Posterior cingulate gyrus (tissue), 11 donors: ENCODE measurements at regions of chr1 and their contacts with region 1.

Region 1: DNA sequence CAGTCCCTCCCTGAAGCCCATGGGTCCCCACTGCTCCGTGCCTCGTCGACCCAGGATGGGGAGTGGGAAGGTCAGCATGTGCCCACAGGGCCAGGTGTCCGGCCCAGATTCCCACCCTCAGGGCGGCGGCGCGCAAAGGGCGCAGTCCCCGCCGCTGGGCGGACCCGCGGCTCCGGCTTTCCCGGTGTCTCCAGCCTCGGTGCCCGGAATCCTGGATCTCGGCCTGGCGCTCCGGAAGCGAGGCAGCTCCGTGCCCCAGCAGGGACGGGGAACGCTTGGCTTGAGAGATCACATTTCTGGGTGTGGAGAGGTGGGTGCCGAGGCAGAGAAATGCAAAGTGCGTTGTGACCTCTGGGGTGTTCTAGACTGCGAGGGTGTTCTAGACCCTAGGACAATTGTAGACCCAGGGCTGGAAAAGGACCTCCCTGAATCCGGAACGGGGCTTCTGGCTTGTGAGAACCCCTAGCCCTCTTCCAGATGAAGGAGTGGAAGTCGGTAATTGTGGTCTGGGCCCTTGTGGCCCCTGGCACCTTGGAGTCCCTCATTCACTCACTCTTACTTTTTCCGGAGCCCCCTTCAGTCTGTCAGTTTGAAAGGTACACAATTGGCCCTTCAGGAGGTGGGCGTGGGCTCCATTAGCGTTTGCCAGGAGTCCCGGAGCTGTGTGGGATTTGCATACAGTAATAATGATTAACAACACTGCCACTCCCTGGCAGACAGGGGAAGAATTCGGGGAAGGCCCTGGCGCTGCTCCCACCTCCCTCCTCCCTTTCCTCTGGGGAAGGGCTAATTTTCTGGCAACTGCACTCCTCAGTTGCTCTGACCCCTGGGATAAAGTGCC is 1.6 kb upstream of the KCND3 start:
- DNase-seq: peak; percentile 58 to 96 (median 75)

Region 2: DNA sequence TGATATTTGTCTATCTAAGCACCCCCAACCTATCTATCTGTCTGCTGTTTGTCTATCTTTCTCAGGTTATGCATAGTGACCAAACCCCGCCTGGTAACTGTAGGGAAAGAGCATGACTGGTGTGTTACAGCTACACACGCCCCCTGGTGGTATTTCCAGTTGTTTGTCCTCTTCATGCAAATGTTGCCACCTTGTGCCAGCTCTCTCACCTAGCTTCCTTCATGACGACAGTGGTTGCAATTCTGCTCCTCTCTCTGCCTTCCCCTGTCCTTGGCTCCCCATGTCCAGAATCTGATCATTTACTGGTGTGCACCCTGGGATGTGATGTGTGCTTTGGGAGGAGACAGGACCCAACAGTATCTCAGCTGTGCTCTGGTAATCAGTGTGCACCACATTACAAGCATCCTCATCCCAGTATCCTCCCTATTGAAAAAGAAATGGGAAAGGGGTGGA is 243.8 kb before region 1 on chr1:
- intact Hi-C with region 1: no loop called
- DNase-seq: no peak

Region 3: GRCh38 chr1:111789666-111790316 is 201.3 kb before region 1 on chr1:
- intact Hi-C with region 1: loop called (anchors 1 kb)
- DNase-seq: no peak

Region 4: GRCh38 chr1:112272101-112272772 is 281.1 kb after region 1 on chr1:
- intact Hi-C with region 1: loop called (anchors 5 kb)
- DNase-seq: peak in 4 of 10 donors; percentile 25 to 83 (median 40)

Region 5: DNA sequence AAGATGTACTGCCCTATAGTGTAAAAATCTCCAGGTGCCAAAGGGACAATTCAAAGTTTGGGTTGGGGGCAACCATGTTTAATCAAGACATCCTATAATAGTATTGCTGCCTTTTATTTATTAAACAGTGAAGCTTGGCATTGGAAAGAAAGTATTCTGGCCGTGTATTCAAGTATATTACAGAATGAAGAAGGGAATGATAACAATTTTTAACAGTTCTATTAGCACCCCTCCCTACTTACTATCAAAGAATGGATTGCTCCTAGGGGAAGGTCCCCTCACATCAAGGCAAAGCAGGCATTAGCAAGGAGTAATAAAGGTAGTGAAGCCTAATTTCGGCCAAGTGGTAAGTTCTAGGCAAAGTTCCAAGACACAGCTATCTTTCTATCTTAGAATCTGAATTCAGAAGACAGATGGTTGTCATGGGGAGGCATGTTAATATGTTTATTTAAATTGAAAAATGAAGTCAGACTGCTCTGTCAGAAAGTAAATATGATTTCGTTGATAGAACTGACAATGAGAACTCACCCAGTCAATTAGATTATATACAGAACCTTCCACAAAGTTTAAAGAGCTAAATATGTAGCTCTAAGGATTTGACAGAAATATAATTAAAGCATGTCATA is 603.3 kb after region 1 on chr1:
- intact Hi-C with region 1: no loop called
- DNase-seq: no peak